Ascending aorta (tissue), 2 donors: ENCODE measurements at regions of chr20 and their contacts with region 1.

Region 1: GRCh38 chr20:62065669-62066338 is at the start of gene TAF4:
- DNase-seq: peak in 1 of 2 donors; percentile 85
- H3K4me3 ChIP-seq: peak within 1 kb of the TSS; percentile 81 to 86
- H3K27ac ChIP-seq: peak within 1 kb of the TSS; percentile 89 to 93
- H3K4me1 ChIP-seq: peaks cover 4 to 20% of the 10 kb centered on the region in 2 donors
- H3K27me3 ChIP-seq: no peaks in the 10 kb centered on the region
- CTCF ChIP-seq: no peak
- total RNA-seq, gene TAF4: 166 TPM

Region 2: DNA sequence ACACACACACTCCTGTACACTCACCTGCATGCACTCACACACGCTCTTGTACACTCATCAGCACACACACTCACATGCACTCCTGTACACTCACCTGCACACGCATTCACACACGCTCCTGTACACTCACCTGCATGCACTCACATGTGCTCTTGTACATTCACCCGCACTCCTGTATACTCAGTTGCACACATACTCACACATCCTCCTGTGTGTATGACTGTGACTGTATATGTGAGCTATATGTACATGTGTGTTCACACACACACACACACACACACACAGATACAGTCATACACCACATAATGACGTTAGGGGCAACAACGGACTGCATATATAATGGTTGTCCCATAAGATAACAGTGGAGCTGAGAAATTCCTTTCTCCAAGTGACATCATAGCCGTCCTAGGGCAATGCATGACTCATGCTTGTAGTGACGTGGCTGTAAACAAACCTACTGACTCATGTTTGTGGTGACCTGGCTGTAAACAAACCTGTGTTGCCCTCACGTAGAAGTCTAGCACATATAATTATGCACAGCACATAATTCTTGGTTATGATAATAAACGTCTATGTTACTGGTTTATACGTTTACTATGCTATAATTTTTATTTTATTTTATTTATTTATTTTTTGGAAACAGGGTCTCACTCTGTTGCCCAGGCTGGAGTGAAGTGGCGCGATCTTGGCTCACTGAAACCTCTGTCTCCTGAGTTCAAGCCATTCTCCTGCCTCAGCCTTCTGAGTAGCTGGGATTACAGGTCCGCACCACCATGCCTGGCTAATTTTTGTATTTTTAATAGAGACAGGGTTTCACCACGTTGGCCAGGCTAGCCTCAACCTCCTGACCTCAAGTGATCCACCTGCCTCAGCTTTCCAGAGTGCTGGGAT is 22.7 kb after region 1 on chr20:
- intact Hi-C with region 1: no loop called
- DNase-seq: no peak
- H3K4me3 ChIP-seq: no peak overlapping the region
- H3K27ac ChIP-seq: no peak overlapping the region
- H3K4me1 ChIP-seq: no peaks in the 10 kb centered on the region
- H3K27me3 ChIP-seq: no peaks in the 10 kb centered on the region
- CTCF ChIP-seq: no peak

Region 3: GRCh38 chr20:62121776-62122631 is 56.2 kb after region 1 on chr20 and contains the start of gene LSM14B:
- intact Hi-C with region 1: loop called (anchors 1 kb)
- DNase-seq: peak; percentile 84 to 98
- H3K4me3 ChIP-seq: peak within 1 kb of the TSS; percentile 70 to 84
- H3K27ac ChIP-seq: peak within 1 kb of the TSS; percentile 97 to 98
- H3K4me1 ChIP-seq: peaks cover 0 to 26% of the 10 kb centered on the region in 2 donors
- H3K27me3 ChIP-seq: no peaks in the 10 kb centered on the region
- CTCF ChIP-seq: no peak
- total RNA-seq, gene LSM14B: 27.6 TPM

Region 4: DNA sequence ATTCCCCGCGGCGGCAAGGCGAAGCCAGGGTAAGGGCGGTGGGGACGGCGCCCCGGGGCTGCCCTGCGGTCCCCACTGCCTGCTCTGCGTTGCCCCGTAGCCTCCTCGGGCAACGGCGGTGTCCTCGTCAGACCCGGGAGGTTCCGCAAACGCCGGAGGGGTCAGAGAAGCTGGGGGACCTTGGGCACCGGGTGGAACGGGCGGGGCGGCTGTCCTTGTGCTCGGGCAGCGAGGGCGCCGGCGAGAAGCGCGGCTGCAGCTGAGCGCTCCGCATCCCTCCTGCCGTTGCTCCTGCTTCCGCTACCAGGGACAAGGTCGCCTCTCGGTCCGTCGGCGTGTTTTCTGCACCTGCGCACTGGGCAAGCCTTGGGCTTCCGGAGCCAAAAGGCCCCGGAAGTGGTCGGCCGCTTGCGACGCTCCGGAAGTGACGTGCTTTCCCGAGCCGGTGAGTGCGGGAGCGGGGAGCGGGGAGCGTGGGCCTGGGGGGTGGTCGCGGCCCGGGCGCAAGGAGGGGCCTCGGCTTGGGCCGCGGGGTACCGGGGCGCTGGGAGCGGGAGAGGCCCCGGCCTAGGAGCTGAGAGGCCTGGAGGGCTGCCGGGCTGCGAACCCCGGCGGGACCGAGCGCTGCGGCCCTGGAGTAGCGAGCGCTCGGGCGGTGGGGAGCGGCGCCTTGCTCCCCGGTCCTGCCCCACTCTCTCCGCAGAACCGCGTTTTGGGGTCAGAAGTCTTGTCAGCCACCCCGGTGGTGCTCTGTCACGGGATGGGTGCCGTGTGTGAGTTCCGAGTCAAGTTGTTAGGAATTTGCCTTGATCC is 117.0 kb after region 1 on chr20 and contains the start of gene MTG2:
- intact Hi-C with region 1: loop called (anchors 2 kb)
- DNase-seq: peak; percentile 61 to 96
- H3K4me3 ChIP-seq: peak within 1 kb of the TSS; percentile 84 to 88
- H3K27ac ChIP-seq: peak within 1 kb of the TSS; percentile 87 to 97
- H3K4me1 ChIP-seq: peaks cover 3 to 19% of the 10 kb centered on the region in 2 donors
- H3K27me3 ChIP-seq: no peaks in the 10 kb centered on the region
- CTCF ChIP-seq: no peak
- total RNA-seq, gene MTG2: 14.5 TPM

Region 5: DNA sequence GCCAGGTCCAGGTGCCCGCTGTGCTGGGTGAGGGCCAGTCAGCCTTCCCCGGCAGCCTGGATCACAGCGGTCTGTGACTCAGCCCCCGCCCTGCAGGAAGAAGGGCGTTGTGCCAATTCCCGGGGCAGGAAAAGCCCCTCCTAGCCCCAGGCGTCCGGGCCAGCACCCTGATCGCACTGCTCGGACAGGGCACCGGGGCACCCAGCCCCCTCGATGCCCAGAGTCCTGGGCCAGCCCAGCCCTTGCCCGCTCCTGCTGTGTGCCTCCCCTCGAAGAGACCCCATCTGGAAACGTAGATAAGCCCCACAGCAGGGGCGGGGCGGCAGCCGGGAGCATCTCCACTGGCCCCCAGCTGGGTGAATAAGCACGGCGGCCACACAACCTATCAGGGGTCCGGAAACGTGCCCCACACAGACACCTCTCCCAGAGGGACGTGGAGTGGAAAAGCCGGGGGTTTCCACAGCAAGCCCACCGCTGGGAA is 291.4 kb after region 1 on chr20:
- intact Hi-C with region 1: no loop called
- DNase-seq: peak in 1 of 2 donors; percentile 91
- H3K4me3 ChIP-seq: peak overlapping the region; percentile 49 to 60
- H3K27ac ChIP-seq: peak overlapping the region; percentile 98 to 99
- H3K4me1 ChIP-seq: peaks cover 65 to 93% of the 10 kb centered on the region in 2 donors
- H3K27me3 ChIP-seq: no peaks in the 10 kb centered on the region
- CTCF ChIP-seq: no peak

Region 6: DNA sequence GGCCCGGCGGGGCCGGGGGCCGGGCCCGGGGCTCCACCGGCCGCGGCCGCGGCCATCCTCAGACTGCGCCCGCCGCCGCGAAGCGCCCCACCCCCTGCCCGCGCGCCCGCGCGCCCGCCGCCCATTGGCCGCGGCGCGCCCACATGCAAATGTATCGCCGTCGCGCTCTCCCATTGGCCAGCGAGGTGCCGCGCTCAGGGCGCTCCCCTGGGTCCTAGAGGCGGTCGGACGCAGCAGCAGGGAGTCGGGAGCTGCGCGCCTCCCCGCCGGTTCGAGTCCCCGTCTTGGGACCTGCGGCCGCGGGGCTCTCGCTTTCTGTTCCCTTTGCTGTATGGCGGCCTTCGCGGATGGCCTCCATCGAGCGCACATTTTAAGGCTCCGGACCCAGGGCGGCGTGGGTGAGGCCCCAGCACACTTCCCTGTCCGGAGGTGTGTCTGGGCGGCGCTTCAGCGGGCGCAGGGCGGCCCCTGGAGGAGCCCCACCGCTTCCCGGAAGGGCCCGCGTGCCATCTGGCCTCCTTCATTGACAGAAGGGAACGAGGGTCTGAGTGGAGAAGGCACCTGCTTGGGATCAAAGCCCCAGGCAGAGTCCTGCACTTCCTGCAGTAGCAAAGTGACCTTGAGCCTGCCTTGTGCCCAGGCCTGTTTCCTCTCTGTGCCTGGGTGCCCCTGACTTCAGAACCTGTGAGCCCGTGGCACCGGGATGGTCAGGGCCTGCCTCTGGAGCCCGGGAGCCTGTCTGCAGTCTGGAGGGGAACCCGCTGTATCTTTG is 341.6 kb after region 1 on chr20 and contains the start of gene CABLES2:
- intact Hi-C with region 1: loop called (anchors 10 kb)
- DNase-seq: peak; percentile 87 to 96
- H3K4me3 ChIP-seq: peak within 1 kb of the TSS; percentile 69 to 81
- H3K27ac ChIP-seq: peak within 1 kb of the TSS; percentile 48 to 72
- H3K4me1 ChIP-seq: peaks cover 10 to 24% of the 10 kb centered on the region in 2 donors
- H3K27me3 ChIP-seq: no peaks in the 10 kb centered on the region
- CTCF ChIP-seq: peak in 1 of 3 experiments; percentile 25
- total RNA-seq, gene CABLES2: 0.43 TPM

Region 7: GRCh38 chr20:62926239-62927104 is 860.7 kb after region 1 on chr20 and contains the start of gene DIDO1:
- intact Hi-C with region 1: loop called (anchors 5 kb)
- DNase-seq: peak; percentile 52 to 89
- H3K4me3 ChIP-seq: peak within 1 kb of the TSS; percentile 79 to 97
- H3K27ac ChIP-seq: peak within 1 kb of the TSS; percentile 96 to 98
- H3K4me1 ChIP-seq: peaks cover 20 to 63% of the 10 kb centered on the region in 2 donors
- H3K27me3 ChIP-seq: no peaks in the 10 kb centered on the region
- CTCF ChIP-seq: peak; percentile 47 to 83 (median 70)
- total RNA-seq, gene DIDO1: 42.4 TPM